Posterior cingulate gyrus (tissue), 11 donors: ENCODE measurements at regions of chr15 and their contacts with region 1.

Region 1: DNA sequence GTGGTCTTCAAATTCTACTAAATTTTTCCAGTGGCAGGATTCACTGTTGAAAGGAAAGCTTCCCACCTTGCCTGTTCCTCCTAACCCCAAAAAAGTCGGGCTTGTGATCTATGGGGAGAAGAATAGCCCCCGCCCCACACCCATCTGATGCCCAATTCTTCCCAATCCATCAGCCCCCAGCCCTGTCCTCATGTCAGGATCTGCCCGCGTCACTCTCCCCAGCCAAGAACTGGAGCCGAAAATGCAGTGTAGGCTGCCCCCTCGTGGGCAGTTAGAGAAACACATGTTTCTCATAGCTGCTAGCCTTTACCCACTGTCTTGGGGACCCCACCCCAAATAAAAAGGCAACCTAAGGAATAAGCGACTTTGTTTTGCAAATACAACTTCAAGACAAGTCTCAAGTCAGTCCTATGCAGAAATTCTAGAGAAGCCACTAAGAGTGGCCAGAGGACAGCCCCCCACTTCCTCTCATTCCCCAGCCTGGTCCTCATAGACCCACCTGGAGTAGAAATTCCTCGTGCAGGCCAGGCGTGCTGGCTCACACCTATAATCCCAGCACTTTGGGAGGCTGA is 13.0 kb upstream of the CSK start:
- DNase-seq: peak; percentile 23 to 94 (median 69)

Region 2: DNA sequence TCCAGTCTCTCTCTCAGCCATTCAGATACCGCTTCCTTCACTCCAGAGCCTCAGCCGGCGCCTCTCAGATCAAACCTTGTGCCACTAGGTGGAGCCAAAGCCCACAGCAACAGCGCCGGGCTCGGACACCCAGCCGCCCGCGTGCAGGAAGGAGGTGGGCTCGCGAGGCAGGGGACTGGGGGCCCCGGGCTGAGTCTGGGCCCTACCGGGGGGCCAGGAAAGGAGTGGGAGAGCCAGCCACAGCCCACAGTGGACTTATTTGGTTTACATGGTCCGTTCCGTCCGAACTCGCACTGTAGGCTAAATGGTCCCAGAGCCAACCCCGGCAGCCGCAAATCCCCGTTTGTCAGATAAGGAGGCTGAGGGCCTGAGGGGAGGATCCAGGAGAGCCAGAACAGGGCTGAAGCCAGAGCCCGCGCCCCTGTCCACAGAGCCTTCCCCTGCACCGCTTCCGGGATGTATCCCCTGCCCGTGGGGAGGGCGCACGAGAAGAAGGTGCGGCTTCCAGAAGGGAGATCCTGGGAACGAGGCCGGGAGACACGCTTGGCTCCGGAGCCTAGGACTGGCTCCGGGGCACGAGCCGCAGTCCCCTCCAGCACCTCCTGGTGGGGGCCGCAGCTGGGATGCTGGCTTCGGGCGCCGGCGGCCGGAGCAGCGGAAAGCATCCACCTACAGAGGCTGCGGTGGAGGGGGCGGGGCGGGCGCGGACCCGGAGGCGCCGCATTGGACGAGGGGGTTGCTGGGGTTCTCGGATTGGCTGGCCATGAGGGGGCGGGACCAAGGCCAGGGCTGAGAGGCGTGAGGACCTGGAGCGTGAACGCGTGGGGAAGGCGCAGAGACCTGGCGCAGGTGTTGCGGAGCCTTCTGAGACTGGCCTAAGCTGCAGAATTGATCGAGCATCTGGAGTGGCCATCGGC is 394.9 kb before region 1 on chr15:
- intact Hi-C with region 1: loop called (anchors 5 kb)
- DNase-seq: peak; percentile 76 to 98 (median 90)

Region 3: GRCh38 chr15:74635228-74635627 is 133.6 kb before region 1 on chr15:
- intact Hi-C with region 1: loop called (anchors 1 kb)
- DNase-seq: peak in 9 of 10 donors; percentile 59 to 95 (median 73)

Region 4: GRCh38 chr15:74799856-74800547 is 31.1 kb after region 1 on chr15:
- intact Hi-C with region 1: loop called (anchors 1 kb)
- DNase-seq: peak in 9 of 10 donors; percentile 53 to 96 (median 71)

Region 5: DNA sequence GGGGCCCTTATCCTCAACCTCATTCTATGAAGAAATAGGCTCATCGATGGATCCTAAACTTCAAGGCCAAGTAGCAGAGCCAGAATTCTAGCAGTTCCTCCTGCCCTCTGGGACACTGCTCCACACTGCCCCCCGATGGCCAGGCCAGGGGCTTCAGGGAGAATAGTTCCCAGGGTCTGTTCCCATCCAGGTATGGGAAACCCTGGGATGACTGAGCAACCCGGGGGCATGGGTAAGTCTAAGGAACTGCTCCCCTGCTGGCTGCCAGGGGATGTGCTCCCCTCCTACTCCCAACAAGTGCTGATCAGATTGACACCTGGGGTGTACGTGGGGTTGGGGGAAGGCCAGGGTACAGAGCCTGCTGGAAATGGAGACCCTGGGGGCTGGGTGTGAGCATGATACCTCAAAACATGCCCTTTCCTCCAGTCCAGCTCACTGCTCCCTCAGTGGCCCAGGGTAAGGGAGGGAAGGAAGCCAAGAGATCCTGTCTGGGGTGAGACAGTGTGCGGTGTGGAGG is 66.5 kb after region 1 on chr15:
- intact Hi-C with region 1: loop called (anchors 5 kb)
- DNase-seq: peak in 7 of 10 donors; percentile 49 to 90 (median 54)

Region 6: GRCh38 chr15:74950078-74951000 is 181.5 kb after region 1 on chr15:
- intact Hi-C with region 1: loop called (anchors 1 kb)
- DNase-seq: peak in 8 of 10 donors; percentile 55 to 87 (median 80)